CD14-positive monocyte (primary cell): ENCODE measurements at regions of chr4 and their contacts with region 1.

Region 1: GRCh38 chr4:39697740-39698423 is at the start of gene UBE2K:
- DNase-seq: peak; percentile 80 to 82 (median 81)
- H3K4me3 ChIP-seq: peak within 1 kb of the TSS; percentile 73 to 99 (median 98)
- H3K4me3 Mint-ChIP-seq: peak within 1 kb of the TSS; percentile 96 to 99
- H3K27ac ChIP-seq: peak within 1 kb of the TSS; percentile 84 to 93
- H3K27ac Mint-ChIP-seq: peak within 1 kb of the TSS; percentile 93 to 98 (median 96)
- H3K4me1 ChIP-seq: peaks cover 21 to 34% of the 10 kb centered on the region in 2 donors
- H3K4me1 Mint-ChIP-seq: peaks cover 30% of the 10 kb centered on the region
- H3K27me3 ChIP-seq: no peaks in the 10 kb centered on the region
- H3K27me3 Mint-ChIP-seq: peaks cover 0 to 2% (median 0%) of the 10 kb centered on the region in 3 donors
- CTCF ChIP-seq: no peak
- polyA plus RNA-seq, gene UBE2K: 24.2 to 66.8 (median 50.0) TPM

Region 2: GRCh38 chr4:39638354-39639240 is 59.3 kb before region 1 on chr4 and contains the start of gene SMIM14:
- intact Hi-C with region 1: loop called in 1 of 2 experiments (anchors 5 kb)
- DNase-seq: peak; percentile 98 to 99 (median 98)
- H3K4me3 ChIP-seq: peak within 1 kb of the TSS; percentile 78 to 98 (median 93)
- H3K4me3 Mint-ChIP-seq: peak within 1 kb of the TSS; percentile 93 to 97
- H3K27ac ChIP-seq: peak within 1 kb of the TSS; percentile 95 to 96
- H3K27ac Mint-ChIP-seq: peak within 1 kb of the TSS; percentile 97 to 99 (median 98)
- H3K4me1 ChIP-seq: peaks cover 18 to 25% of the 10 kb centered on the region in 2 donors
- H3K4me1 Mint-ChIP-seq: peaks cover 27% of the 10 kb centered on the region
- H3K27me3 ChIP-seq: no peaks in the 10 kb centered on the region
- H3K27me3 Mint-ChIP-seq: no peaks in the 10 kb centered on the region
- CTCF ChIP-seq: no peak
- polyA plus RNA-seq, gene SMIM14: 13.6 to 152 (median 140) TPM

Region 3: GRCh38 chr4:39977489-39978377 is 279.9 kb after region 1 on chr4 and contains the start of gene PDS5A:
- intact Hi-C with region 1: loop called (anchors 5 kb)
- DNase-seq: peak; percentile 81 to 88 (median 82)
- H3K4me3 ChIP-seq: peak within 1 kb of the TSS; percentile 76 to 92 (median 89)
- H3K4me3 Mint-ChIP-seq: peak within 1 kb of the TSS; percentile 82 to 94
- H3K27ac ChIP-seq: peak within 1 kb of the TSS; percentile 61 to 83
- H3K27ac Mint-ChIP-seq: peak within 1 kb of the TSS; percentile 81 to 93 (median 87)
- H3K4me1 ChIP-seq: peaks cover 8 to 20% of the 10 kb centered on the region in 2 donors
- H3K4me1 Mint-ChIP-seq: peaks cover 13% of the 10 kb centered on the region
- H3K27me3 ChIP-seq: no peaks in the 10 kb centered on the region
- H3K27me3 Mint-ChIP-seq: peaks cover 1 to 2% (median 1%) of the 10 kb centered on the region in 3 donors
- CTCF ChIP-seq: peak; percentile 84
- polyA plus RNA-seq, gene PDS5A: 14.2 to 19.4 (median 17.7) TPM